GM12878 (cell line): ENCODE measurements at regions of chr3 and their contacts with region 1.

Region 1: GRCh38 chr3:66253790-66254620 is 33.2 kb downstream of the SLC25A26 start:
- DNase-seq: no peak
- ATAC-seq: peak; percentile 62
- H3K4me3 ChIP-seq: no peak overlapping the region
- H3K27ac ChIP-seq: no peak overlapping the region
- H3K4me1 ChIP-seq: no peaks in the 10 kb centered on the region
- H3K27me3 ChIP-seq: no peaks in the 10 kb centered on the region
- CTCF ChIP-seq: peak; percentile 44 to 62 (median 55); a peak in 4 of 6 replicates
- EP300 ChIP-seq: no peak
- POLR2A ChIP-seq: no peak
- RAD21 ChIP-seq: peak; percentile 66

Region 2: GRCh38 chr3:66236281-66236680 is 17.7 kb before region 1 on chr3:
- CTCF ChIA-PET with region 1: interaction called, 21 read pairs
- POLR2A ChIA-PET with region 1: no interaction called
- RAD21 ChIA-PET with region 1: interaction called, 3 read pairs
- SMC1A ChIA-PET with region 1: interaction called, 8 read pairs
- in situ Hi-C with region 1: no loop called
- intact Hi-C with region 1: no loop called
- DNase-seq: no peak
- ATAC-seq: no peak
- H3K4me3 ChIP-seq: no peak overlapping the region
- H3K27ac ChIP-seq: no peak overlapping the region
- H3K4me1 ChIP-seq: no peaks in the 10 kb centered on the region
- H3K27me3 ChIP-seq: no peaks in the 10 kb centered on the region
- CTCF ChIP-seq: no peak
- EP300 ChIP-seq: no peak
- POLR2A ChIP-seq: no peak
- RAD21 ChIP-seq: no peak

Region 3: DNA sequence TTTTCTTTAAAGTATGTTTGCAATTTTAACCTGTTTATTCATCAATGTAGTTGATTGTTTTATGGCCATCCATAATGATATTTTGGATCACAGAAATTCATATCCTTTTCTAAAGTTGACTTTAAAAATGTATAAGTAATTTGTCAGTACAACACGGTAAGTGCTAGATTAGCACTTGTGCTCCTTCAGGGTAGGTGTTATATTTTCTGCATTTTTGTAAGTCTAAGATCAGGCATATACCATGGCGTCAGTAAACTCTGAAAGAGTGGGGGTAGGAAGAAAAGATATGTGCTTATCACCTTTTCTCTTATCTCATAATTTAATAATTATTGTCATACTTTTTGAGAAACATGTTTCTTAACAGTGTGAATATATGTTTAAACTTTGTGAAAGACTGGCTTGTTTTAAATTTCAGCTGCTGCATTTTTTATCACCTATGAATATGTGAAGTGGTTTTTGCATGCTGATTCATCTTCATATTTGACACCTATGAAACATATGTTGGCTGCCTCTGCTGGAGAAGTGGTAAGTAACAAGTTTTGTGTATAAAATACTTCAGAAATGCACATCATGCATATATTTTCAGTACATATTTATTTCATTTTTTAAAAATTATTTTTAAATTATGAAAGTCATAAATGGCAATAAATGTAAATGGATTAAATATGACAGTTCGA is 11.1 kb before region 1 on chr3:
- CTCF ChIA-PET with region 1: interaction called, 21 read pairs
- POLR2A ChIA-PET with region 1: no interaction called
- RAD21 ChIA-PET with region 1: interaction called, 3 read pairs
- SMC1A ChIA-PET with region 1: interaction called, 8 read pairs
- in situ Hi-C with region 1: no loop called
- intact Hi-C with region 1: no loop called
- DNase-seq: no peak
- ATAC-seq: no peak
- H3K4me3 ChIP-seq: no peak overlapping the region
- H3K27ac ChIP-seq: no peak overlapping the region
- H3K4me1 ChIP-seq: no peaks in the 10 kb centered on the region
- H3K27me3 ChIP-seq: no peaks in the 10 kb centered on the region
- CTCF ChIP-seq: no peak
- EP300 ChIP-seq: no peak
- POLR2A ChIP-seq: no peak
- RAD21 ChIP-seq: no peak

Region 4: GRCh38 chr3:66270701-66271100 is 16.7 kb after region 1 on chr3:
- CTCF ChIA-PET with region 1: interaction called, 23 read pairs
- POLR2A ChIA-PET with region 1: no interaction called
- RAD21 ChIA-PET with region 1: interaction called, 3 read pairs
- SMC1A ChIA-PET with region 1: interaction called, 5 read pairs
- in situ Hi-C with region 1: no loop called
- intact Hi-C with region 1: no loop called
- DNase-seq: no peak
- ATAC-seq: no peak
- H3K4me3 ChIP-seq: no peak overlapping the region
- H3K27ac ChIP-seq: no peak overlapping the region
- H3K4me1 ChIP-seq: no peaks in the 10 kb centered on the region; the same call in 1 of the 2 replicates
- H3K27me3 ChIP-seq: no peaks in the 10 kb centered on the region
- CTCF ChIP-seq: no peak
- EP300 ChIP-seq: no peak
- POLR2A ChIP-seq: no peak
- RAD21 ChIP-seq: no peak

Region 5: GRCh38 chr3:66816090-66816761 is 562.2 kb after region 1 on chr3:
- CTCF ChIA-PET with region 1: interaction called, 100 read pairs
- POLR2A ChIA-PET with region 1: no interaction called
- RAD21 ChIA-PET with region 1: interaction called, 19 read pairs
- SMC1A ChIA-PET with region 1: interaction called, 70 read pairs
- in situ Hi-C with region 1: no loop called
- intact Hi-C with region 1: loop called (anchors 1 kb)
- DNase-seq: no peak
- ATAC-seq: peak; percentile 91
- H3K4me3 ChIP-seq: no peak overlapping the region
- H3K27ac ChIP-seq: no peak overlapping the region
- H3K4me1 ChIP-seq: no peaks in the 10 kb centered on the region
- H3K27me3 ChIP-seq: no peaks in the 10 kb centered on the region
- CTCF ChIP-seq: peak; percentile 22 to 62 (median 43); a peak in 5 of 6 replicates
- EP300 ChIP-seq: no peak
- POLR2A ChIP-seq: no peak
- RAD21 ChIP-seq: peak; percentile 79